ENCODE measurements at regions of chr11 and their contacts with region 1.

Region 1: DNA sequence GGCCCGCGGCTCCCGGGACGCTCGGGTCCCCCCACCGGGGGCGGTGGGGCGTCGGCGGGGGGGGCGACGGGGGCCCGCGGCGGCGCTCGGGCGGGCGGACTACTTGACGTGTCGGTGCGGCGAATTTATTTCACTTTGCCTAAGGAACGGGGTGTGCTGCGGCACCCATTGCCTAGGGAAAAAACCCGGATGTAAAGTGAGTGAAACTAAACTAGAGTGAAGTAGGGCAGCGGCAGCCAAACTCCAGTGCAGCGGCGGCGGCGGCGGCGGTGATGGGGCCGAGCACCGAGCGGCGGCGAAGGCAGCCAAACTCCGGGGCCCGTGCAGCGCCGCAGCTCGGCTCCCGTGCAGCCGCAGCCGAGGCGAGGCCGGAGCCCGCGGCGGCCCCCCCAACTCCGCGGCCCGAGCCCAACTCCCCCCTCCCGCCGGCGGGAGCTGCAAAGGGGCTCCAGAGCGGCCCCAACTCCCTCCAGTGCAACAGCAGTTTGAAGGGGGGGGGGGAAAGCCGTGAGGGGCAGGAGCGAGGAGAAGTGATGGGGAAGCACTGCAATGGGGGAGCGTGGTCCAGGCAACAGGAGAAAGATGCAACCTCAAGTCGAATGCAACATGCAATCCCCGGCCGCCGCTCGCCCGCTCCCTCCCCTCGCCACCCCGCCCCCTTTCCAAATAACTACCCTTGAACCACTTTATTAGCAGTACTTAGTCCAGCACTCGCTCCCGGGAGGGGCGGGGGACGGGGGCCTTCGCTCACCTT is 647 bp upstream of the PHF21A start:
- DNase-seq: peak; percentile 81 to 93 (median 87)
- H3K4me3 ChIP-seq: peak overlapping the region; percentile 68 to 89 (median 70)
- H3K4me3 Mint-ChIP-seq: peak overlapping the region; percentile 81 to 87
- H3K27ac ChIP-seq: peak overlapping the region; percentile 65 to 73
- H3K27ac Mint-ChIP-seq: peak overlapping the region; percentile 82 to 94 (median 91)
- H3K4me1 ChIP-seq: peaks cover 31 to 37% of the 10 kb centered on the region in 2 donors
- H3K4me1 Mint-ChIP-seq: peaks cover 38% of the 10 kb centered on the region
- H3K27me3 ChIP-seq: no peaks in the 10 kb centered on the region
- H3K27me3 Mint-ChIP-seq: peaks cover 0 to 3% (median 0%) of the 10 kb centered on the region in 3 donors
- CTCF ChIP-seq: no peak

Region 2: GRCh38 chr11:45846974-45847910 is 274.7 kb before region 1 on chr11 and contains the start of gene CRY2:
- intact Hi-C with region 1: loop called in 1 of 2 experiments (anchors 5 kb)
- DNase-seq: peak; percentile 99 to 100 (median 100)
- H3K4me3 ChIP-seq: peak within 1 kb of the TSS; percentile 87 to 98 (median 93)
- H3K4me3 Mint-ChIP-seq: peak within 1 kb of the TSS; percentile 85 to 86
- H3K27ac ChIP-seq: peak within 1 kb of the TSS; percentile 94 to 97
- H3K27ac Mint-ChIP-seq: peak within 1 kb of the TSS; percentile 90 to 96 (median 93)
- H3K4me1 ChIP-seq: peaks cover 40 to 41% of the 10 kb centered on the region in 2 donors
- H3K4me1 Mint-ChIP-seq: peaks cover 53% of the 10 kb centered on the region
- H3K27me3 ChIP-seq: peaks cover 0 to 3% of the 10 kb centered on the region in 2 donors
- H3K27me3 Mint-ChIP-seq: peaks cover 5 to 19% (median 9%) of the 10 kb centered on the region in 3 donors
- CTCF ChIP-seq: no peak
- polyA plus RNA-seq, gene CRY2: 5.1 to 12.5 (median 7.2) TPM

Region 3: DNA sequence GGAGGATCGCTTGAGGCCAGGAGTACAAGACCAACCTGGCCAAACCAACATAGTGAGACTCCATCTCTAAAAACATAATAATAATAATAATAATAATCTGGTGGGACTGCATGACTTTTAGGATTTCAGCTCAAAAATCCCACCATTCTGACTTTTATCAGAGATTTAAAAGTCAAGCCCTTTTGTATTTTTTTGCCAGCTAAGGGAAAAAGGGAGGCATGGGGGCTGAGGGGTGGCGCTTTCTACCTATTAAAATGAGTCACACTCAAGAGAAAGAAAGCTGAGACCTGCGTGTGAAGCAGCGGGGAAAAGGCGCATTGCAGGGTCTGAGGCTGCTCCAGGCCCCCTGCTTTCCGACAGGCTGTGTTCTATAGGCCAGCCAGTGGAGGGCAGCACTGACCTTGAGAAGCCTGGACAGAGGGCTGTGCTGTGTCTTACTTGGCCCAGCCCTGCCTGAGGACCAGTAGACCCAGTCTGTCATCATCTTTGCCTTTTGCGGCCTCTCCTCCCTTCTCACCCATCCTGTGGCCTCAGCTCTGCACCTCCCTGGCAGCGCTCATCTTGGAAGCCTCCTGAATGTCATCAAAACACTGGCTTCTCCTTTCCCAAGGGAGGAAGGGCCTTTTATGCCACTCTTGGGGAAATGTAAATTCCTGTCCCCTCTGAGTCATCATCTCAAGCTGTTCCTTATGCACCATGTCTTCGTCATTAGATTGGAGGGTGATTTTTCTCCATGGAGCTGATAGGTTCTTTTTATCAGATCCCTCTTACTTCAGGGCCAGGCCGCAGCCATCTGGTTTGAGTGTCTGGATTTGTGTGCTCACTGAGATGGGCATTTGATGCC is 249.2 kb before region 1 on chr11:
- intact Hi-C with region 1: no loop called
- DNase-seq: peak; percentile 12 to 41 (median 19)
- H3K4me3 ChIP-seq: no peak overlapping the region
- H3K4me3 Mint-ChIP-seq: no peak overlapping the region
- H3K27ac ChIP-seq: no peak overlapping the region
- H3K27ac Mint-ChIP-seq: peak overlapping the region in 2 of 7 donors; percentile 22 to 51
- H3K4me1 ChIP-seq: no peaks in the 10 kb centered on the region
- H3K4me1 Mint-ChIP-seq: no peaks in the 10 kb centered on the region
- H3K27me3 ChIP-seq: no peaks in the 10 kb centered on the region
- H3K27me3 Mint-ChIP-seq: no peaks in the 10 kb centered on the region
- CTCF ChIP-seq: peak; percentile 73

Region 4: GRCh38 chr11:46238967-46239800 is 117.3 kb after region 1 on chr11:
- intact Hi-C with region 1: loop called (anchors 5 kb)
- DNase-seq: peak; percentile 81 to 88 (median 84)
- H3K4me3 ChIP-seq: peak overlapping the region; percentile 37 to 78 (median 56)
- H3K4me3 Mint-ChIP-seq: peak overlapping the region; percentile 79 to 87
- H3K27ac ChIP-seq: peak overlapping the region; percentile 64 to 96
- H3K27ac Mint-ChIP-seq: peak overlapping the region in 6 of 7 donors; percentile 68 to 94 (median 92)
- H3K4me1 ChIP-seq: peaks cover 48 to 56% of the 10 kb centered on the region in 2 donors
- H3K4me1 Mint-ChIP-seq: peaks cover 51% of the 10 kb centered on the region
- H3K27me3 ChIP-seq: no peaks in the 10 kb centered on the region
- H3K27me3 Mint-ChIP-seq: peaks cover 3 to 4% (median 4%) of the 10 kb centered on the region in 3 donors
- CTCF ChIP-seq: peak; percentile 99

Region 5: GRCh38 chr11:46315033-46315738 is 193.3 kb after region 1 on chr11:
- intact Hi-C with region 1: loop called in 1 of 2 experiments (anchors 10 kb)
- DNase-seq: peak; percentile 63 to 74 (median 66)
- H3K4me3 ChIP-seq: no peak overlapping the region
- H3K4me3 Mint-ChIP-seq: no peak overlapping the region
- H3K27ac ChIP-seq: no peak overlapping the region
- H3K27ac Mint-ChIP-seq: peak overlapping the region in 3 of 7 donors; percentile 8 to 79 (median 73)
- H3K4me1 ChIP-seq: peaks cover 47 to 50% of the 10 kb centered on the region in 2 donors
- H3K4me1 Mint-ChIP-seq: peaks cover 41% of the 10 kb centered on the region
- H3K27me3 ChIP-seq: no peaks in the 10 kb centered on the region
- H3K27me3 Mint-ChIP-seq: peaks cover 0 to 4% (median 3%) of the 10 kb centered on the region in 3 donors
- CTCF ChIP-seq: peak; percentile 91

Region 6: GRCh38 chr11:46332568-46333393 is 210.9 kb after region 1 on chr11:
- intact Hi-C with region 1: no loop called
- DNase-seq: no peak
- H3K4me3 ChIP-seq: peak overlapping the region in 2 of 3 experiments; percentile 3 to 64
- H3K4me3 Mint-ChIP-seq: peak overlapping the region; percentile 73 to 87
- H3K27ac ChIP-seq: no peak overlapping the region
- H3K27ac Mint-ChIP-seq: peak overlapping the region in 1 of 7 donors; percentile 43
- H3K4me1 ChIP-seq: peaks cover 66 to 74% of the 10 kb centered on the region in 2 donors
- H3K4me1 Mint-ChIP-seq: peaks cover 67% of the 10 kb centered on the region
- H3K27me3 ChIP-seq: peaks cover 14 to 46% of the 10 kb centered on the region in 2 donors
- H3K27me3 Mint-ChIP-seq: peaks cover 47 to 66% (median 58%) of the 10 kb centered on the region in 3 donors
- CTCF ChIP-seq: no peak

Region 7: DNA sequence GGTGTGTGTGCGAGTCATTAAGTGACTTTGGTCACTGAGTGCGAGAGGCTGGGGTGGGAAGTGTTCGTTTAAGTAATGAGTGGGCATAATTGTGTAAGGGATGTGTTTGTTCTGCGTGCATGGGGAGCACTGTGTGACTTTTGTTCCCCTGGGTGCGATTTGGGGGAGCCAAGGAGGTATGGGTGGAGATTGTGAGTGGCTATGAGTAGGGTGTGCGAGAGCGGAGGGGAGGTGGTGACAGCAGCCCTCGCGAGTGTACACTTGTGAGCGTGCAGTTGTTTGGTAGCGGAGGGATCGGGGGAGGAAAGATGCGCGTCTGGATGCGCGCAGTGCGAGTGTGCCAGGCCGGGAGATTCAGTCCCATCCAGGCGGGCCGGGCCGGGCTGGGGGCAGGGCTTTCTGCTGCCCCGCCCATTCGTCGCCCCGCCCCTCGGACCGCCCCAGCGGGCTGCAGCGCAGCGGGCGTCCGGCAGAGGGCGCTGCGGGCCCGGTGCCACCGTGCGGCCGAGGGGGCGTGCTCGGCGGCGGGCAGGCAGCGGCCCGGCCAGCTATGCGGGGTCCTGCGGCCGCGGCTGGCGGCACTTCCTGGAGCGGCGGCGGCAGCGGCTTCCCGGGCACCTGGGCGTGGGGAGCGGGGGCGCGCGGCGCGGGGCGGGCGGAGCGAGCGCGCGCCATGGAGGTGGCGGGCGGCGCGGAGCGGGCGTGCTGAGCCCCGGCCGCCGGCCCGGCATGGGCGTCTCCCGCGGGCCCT is 225.2 kb after region 1 on chr11 and contains the start of gene DGKZ:
- intact Hi-C with region 1: loop called in 1 of 2 experiments (anchors 10 kb)
- DNase-seq: peak; percentile 70 to 86 (median 81)
- H3K4me3 ChIP-seq: peak within 1 kb of the TSS; percentile 88 to 98 (median 92)
- H3K4me3 Mint-ChIP-seq: peak within 1 kb of the TSS; percentile 96 to 100
- H3K27ac ChIP-seq: peak within 1 kb of the TSS; percentile 86 to 93
- H3K27ac Mint-ChIP-seq: peak within 1 kb of the TSS; percentile 95 to 99 (median 96)
- H3K4me1 ChIP-seq: peaks cover 74 to 85% of the 10 kb centered on the region in 2 donors
- H3K4me1 Mint-ChIP-seq: peaks cover 86% of the 10 kb centered on the region
- H3K27me3 ChIP-seq: no peaks in the 10 kb centered on the region
- H3K27me3 Mint-ChIP-seq: peaks cover 0 to 1% (median 0%) of the 10 kb centered on the region in 3 donors
- CTCF ChIP-seq: peak; percentile 81
- polyA plus RNA-seq, gene DGKZ: 30.4 to 217 (median 33.4) TPM

Region 8: GRCh38 chr11:46639197-46639839 is 517.4 kb after region 1 on chr11:
- intact Hi-C with region 1: no loop called
- DNase-seq: no peak
- H3K4me3 ChIP-seq: no peak overlapping the region
- H3K4me3 Mint-ChIP-seq: no peak overlapping the region
- H3K27ac ChIP-seq: no peak overlapping the region
- H3K27ac Mint-ChIP-seq: peak overlapping the region in 2 of 7 donors; percentile 26 to 80
- H3K4me1 ChIP-seq: no peaks in the 10 kb centered on the region
- H3K4me1 Mint-ChIP-seq: peaks cover 9% of the 10 kb centered on the region
- H3K27me3 ChIP-seq: no peaks in the 10 kb centered on the region
- H3K27me3 Mint-ChIP-seq: peaks cover 0 to 2% (median 0%) of the 10 kb centered on the region in 3 donors
- CTCF ChIP-seq: no peak